Upper lobe of right lung (tissue), 1 donor: ENCODE measurements at regions of chr1 and their contacts with region 1.

Region 1: GRCh38 chr1:179077396-179077795 is 4.5 kb upstream of the TOR3A start:
- DNase-seq: no peak
- ATAC-seq: no peak
- H3K4me3 ChIP-seq: no peak overlapping the region
- H3K27ac ChIP-seq: no peak overlapping the region
- H3K4me1 ChIP-seq: peaks cover 6% of the 10 kb centered on the region
- H3K27me3 ChIP-seq: no peaks in the 10 kb centered on the region
- CTCF ChIP-seq: no peak

Region 2: DNA sequence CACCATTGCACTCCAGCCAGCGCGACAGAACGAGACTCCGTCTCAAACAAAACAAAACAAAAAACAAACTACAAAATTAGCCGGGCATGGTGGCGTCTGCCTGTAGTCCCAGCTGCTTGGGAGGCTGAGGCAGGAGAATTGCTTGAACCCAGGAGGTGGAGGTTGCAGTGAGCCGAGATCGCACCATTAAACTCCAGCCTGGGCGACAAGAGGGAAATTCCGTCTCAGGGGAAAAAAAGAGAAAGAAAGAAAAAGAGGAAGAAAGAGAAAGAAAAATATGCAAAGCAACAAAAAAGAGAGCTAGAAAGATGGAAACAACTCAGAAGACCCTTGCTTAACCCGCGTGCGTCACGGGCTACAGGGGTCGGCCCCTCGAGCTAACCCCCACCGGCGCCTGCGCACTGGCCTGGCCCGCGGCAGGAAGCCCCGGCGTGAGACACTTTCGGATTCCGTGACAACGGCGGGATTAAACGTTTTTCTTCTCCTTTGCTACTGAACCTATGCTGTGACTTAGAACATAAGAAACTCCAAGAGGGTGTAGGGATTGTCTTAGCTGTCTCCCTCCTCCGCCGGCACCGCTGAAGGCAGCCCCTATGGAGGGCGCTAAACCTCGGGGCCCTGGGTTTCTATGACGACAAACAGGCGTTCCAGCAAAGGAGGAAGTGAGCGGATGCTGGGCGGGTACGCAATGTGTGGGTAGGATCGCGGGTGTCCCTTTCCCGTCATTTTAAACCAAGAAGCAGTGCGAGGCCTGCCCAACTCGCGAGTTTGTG is 288.1 kb after region 1 on chr1 and contains the start of gene AXDND1:
- intact Hi-C with region 1: loop called (anchors 10 kb)
- DNase-seq: peak; percentile 94
- ATAC-seq: peak; percentile 98
- H3K4me3 ChIP-seq: peak within 1 kb of the TSS; percentile 65
- H3K27ac ChIP-seq: peak within 1 kb of the TSS; percentile 95
- H3K4me1 ChIP-seq: no peaks in the 10 kb centered on the region
- H3K27me3 ChIP-seq: no peaks in the 10 kb centered on the region
- CTCF ChIP-seq: peak; percentile 13
- total RNA-seq, gene AXDND1: not detected

Region 3: GRCh38 chr1:179476484-179476883 is 399.1 kb after region 1 on chr1:
- intact Hi-C with region 1: no loop called
- DNase-seq: no peak
- ATAC-seq: no peak
- H3K4me3 ChIP-seq: no peak overlapping the region
- H3K27ac ChIP-seq: no peak overlapping the region
- H3K4me1 ChIP-seq: no peaks in the 10 kb centered on the region
- H3K27me3 ChIP-seq: no peaks in the 10 kb centered on the region
- CTCF ChIP-seq: no peak